ENCODE measurements at regions of chr19 and their contacts with region 1.

Region 1: DNA sequence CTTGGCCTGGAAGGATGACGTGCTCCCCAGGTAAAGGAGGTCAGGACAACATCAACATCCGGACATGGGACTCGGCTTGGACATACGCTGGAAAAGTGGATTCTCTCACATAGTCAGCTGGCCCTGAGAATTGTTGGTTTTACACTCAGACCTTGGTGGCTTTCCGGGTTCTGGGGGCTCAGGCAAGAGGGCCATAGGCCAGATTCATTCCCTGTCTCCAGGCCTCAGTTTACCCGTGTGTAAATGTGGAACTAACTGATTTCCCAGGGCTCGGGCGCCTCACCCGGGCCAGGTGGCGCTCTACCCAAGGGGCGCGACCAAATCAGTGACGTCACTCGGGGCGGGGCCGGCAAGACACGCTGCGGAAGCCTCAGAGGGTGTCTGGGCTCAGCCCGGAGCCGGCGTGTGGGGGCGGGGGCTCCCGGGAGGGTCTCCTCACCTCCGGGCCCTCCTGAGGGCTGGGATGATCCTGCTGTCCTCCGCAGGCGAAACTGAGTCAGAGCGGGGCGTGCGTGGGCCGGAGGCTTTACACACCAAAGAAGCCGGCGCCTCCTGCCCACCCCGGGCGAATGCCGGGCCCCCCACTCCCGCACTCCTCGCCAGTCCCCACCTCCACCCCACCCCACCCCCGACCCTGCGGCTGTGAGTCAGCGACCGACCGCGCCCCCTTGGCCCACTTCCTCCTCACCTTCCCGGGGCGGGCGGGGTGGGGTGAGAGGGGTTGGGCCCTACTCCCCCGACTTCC is 861 bp upstream of the VASP start:
- DNase-seq: peak; percentile 94
- H3K4me3 ChIP-seq: peak overlapping the region; percentile 78 to 95 (median 90)
- H3K27ac ChIP-seq: peak overlapping the region; percentile 90
- H3K4me1 ChIP-seq: peaks cover 17% of the 10 kb centered on the region
- H3K27me3 ChIP-seq: no peaks in the 10 kb centered on the region
- CTCF ChIP-seq: peak; percentile 17 to 69

Region 2: GRCh38 chr19:45558399-45558878 is 52.0 kb after region 1 on chr19:
- CTCF ChIA-PET with region 1: no interaction called
- dilution Hi-C with region 1: loop called (anchors 5 kb)
- in situ Hi-C with region 1: no loop called
- intact Hi-C with region 1: no loop called
- DNase-seq: peak; percentile 40
- H3K4me3 ChIP-seq: no peak overlapping the region
- H3K27ac ChIP-seq: no peak overlapping the region
- H3K4me1 ChIP-seq: peaks cover 20% of the 10 kb centered on the region
- H3K27me3 ChIP-seq: no peaks in the 10 kb centered on the region
- CTCF ChIP-seq: peak; percentile 88 to 90

Measured in mammary epithelial cell (primary cell).